ENCODE measurements at regions of chr14 and their contacts with region 1.

Region 1: GRCh38 chr14:75002392-75003249 is at the start of gene EIF2B2:
- DNase-seq: peak; percentile 97 to 99
- ATAC-seq: peak; percentile 99 to 100 (median 100)
- H3K4me3 ChIP-seq: peak within 1 kb of the TSS; percentile 73 to 95 (median 86)
- H3K27ac ChIP-seq: peak within 1 kb of the TSS; percentile 59 to 94 (median 90)
- H3K4me1 ChIP-seq: peaks cover 0 to 31% (median 21%) of the 10 kb centered on the region in 9 donors
- H3K27me3 ChIP-seq: no peaks in the 10 kb centered on the region
- CTCF ChIP-seq: peak in 4 of 9 donors; percentile 15 to 48 (median 42)
- total RNA-seq, gene EIF2B2: 25.9 to 44.5 (median 31.5) TPM

Region 2: GRCh38 chr14:74945823-74946682 is 56.6 kb before region 1 on chr14:
- intact Hi-C with region 1: loop called in 8 of 10 experiments (anchors 5 to 10 kb)
- DNase-seq: peak; percentile 76 to 83
- ATAC-seq: peak; percentile 74 to 86 (median 81)
- H3K4me3 ChIP-seq: peak overlapping the region in 3 of 10 donors; percentile 4 to 21 (median 17)
- H3K27ac ChIP-seq: peak overlapping the region in 7 of 10 donors; percentile 8 to 76 (median 54)
- H3K4me1 ChIP-seq: peaks cover 14 to 72% (median 44%) of the 10 kb centered on the region in 9 donors
- H3K27me3 ChIP-seq: peaks cover 0 to 4% (median 0%) of the 10 kb centered on the region in 7 donors
- CTCF ChIP-seq: peak; percentile 89 to 96 (median 95)

Region 3: DNA sequence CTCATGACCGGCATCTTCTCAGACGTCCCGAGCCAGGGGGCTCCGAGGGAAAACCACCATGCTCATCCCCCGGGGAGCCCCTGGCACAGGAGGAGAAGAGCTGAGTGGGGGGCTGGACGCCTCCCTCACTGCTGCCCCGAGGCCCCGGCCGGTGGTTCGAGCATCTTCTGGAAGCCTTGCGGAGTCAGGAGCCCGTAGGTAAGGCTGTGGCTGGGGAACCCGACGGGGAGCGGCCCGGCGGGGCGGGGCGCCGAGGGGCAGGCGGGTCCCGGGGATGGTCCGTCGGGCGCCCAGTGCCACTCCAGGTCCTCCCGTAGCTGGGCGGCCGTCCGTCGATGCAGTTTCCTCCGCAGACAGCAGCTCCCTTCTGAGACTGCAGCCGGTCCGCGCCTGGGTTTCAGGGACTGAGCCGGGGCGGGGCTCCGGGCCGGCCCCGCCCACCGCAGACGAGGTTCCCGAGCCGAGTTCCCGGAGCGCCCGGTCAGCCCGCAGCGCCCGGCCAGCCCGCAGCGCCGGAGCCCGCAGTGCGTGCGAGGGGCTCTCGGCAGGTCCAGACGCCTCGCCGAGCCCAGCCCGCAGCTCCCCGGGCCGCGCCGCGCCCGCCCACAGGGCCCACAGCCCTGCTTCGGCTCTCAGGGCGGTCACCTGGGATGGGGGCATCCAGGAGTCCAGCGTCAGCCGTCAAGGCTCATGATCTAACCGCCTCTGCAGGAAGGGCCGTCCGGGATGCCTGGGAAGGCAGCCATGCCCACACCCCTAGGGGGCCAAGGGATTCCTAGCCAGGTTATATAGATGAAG is 47.2 kb before region 1 on chr14 and contains the start of gene PGF:
- intact Hi-C with region 1: loop called in 2 of 10 experiments (anchors 5 to 10 kb)
- DNase-seq: peak; percentile 71 to 81
- ATAC-seq: peak; percentile 71 to 90 (median 78)
- H3K4me3 ChIP-seq: peak within 1 kb of the TSS; percentile 46 to 87 (median 70)
- H3K27ac ChIP-seq: peak within 1 kb of the TSS in 9 of 10 donors; percentile 57 to 87 (median 79)
- H3K4me1 ChIP-seq: peaks cover 11 to 60% (median 35%) of the 10 kb centered on the region in 9 donors
- H3K27me3 ChIP-seq: peaks cover 0 to 23% (median 0%) of the 10 kb centered on the region in 7 donors
- CTCF ChIP-seq: no peak
- total RNA-seq, gene PGF: 2.1 to 22.5 (median 6.1) TPM

Region 4: GRCh38 chr14:74964787-74965485 is 37.7 kb before region 1 on chr14:
- intact Hi-C with region 1: loop called in 1 of 10 experiments (anchors 5 kb)
- DNase-seq: no peak
- ATAC-seq: peak in 6 of 8 donors; percentile 16 to 81 (median 60)
- H3K4me3 ChIP-seq: no peak overlapping the region
- H3K27ac ChIP-seq: peak overlapping the region in 8 of 10 donors; percentile 12 to 68 (median 57)
- H3K4me1 ChIP-seq: peaks cover 0 to 31% (median 22%) of the 10 kb centered on the region in 9 donors
- H3K27me3 ChIP-seq: no peaks in the 10 kb centered on the region
- CTCF ChIP-seq: no peak

Region 5: GRCh38 chr14:75040507-75040906 is 37.9 kb after region 1 on chr14:
- intact Hi-C with region 1: no loop called
- DNase-seq: no peak
- ATAC-seq: no peak
- H3K4me3 ChIP-seq: no peak overlapping the region
- H3K27ac ChIP-seq: no peak overlapping the region
- H3K4me1 ChIP-seq: peaks cover 0 to 25% (median 15%) of the 10 kb centered on the region in 9 donors
- H3K27me3 ChIP-seq: no peaks in the 10 kb centered on the region
- CTCF ChIP-seq: no peak

Region 6: GRCh38 chr14:75050852-75051554 is 48.4 kb after region 1 on chr14 and contains the start of gene MLH3:
- intact Hi-C with region 1: loop called in 2 of 10 experiments (anchors 5 to 10 kb)
- DNase-seq: peak; percentile 81 to 89
- ATAC-seq: peak; percentile 89 to 97 (median 95)
- H3K4me3 ChIP-seq: peak within 1 kb of the TSS; percentile 47 to 74 (median 66)
- H3K27ac ChIP-seq: peak within 1 kb of the TSS; percentile 80 to 93 (median 90)
- H3K4me1 ChIP-seq: peaks cover 0 to 36% (median 21%) of the 10 kb centered on the region in 9 donors
- H3K27me3 ChIP-seq: no peaks in the 10 kb centered on the region
- CTCF ChIP-seq: peak in 3 of 9 donors; percentile 13 to 21 (median 14)
- total RNA-seq, gene MLH3: 14.7 to 21.6 (median 18.7) TPM

Region 7: GRCh38 chr14:75063407-75064213 is 61.0 kb after region 1 on chr14 and contains the start of gene ACYP1:
- intact Hi-C with region 1: loop called in 5 of 10 experiments (anchors 5 to 10 kb)
- DNase-seq: peak; percentile 92 to 94
- ATAC-seq: peak; percentile 91 to 98 (median 96)
- H3K4me3 ChIP-seq: peak within 1 kb of the TSS; percentile 47 to 94 (median 74)
- H3K27ac ChIP-seq: peak within 1 kb of the TSS in 9 of 10 donors; percentile 14 to 86 (median 72)
- H3K4me1 ChIP-seq: peaks cover 2 to 41% (median 25%) of the 10 kb centered on the region in 9 donors
- H3K27me3 ChIP-seq: no peaks in the 10 kb centered on the region
- CTCF ChIP-seq: peak in 1 of 9 donors; percentile 14
- total RNA-seq, gene ACYP1: 7.9 to 12.6 (median 10.0) TPM

Region 8: GRCh38 chr14:75069045-75069810 is 66.6 kb after region 1 on chr14 and contains the start of gene ZC2HC1C:
- intact Hi-C with region 1: loop called in 4 of 10 experiments (anchors 5 to 10 kb)
- DNase-seq: peak; percentile 97 to 99
- ATAC-seq: peak; percentile 94 to 98 (median 96)
- H3K4me3 ChIP-seq: peak within 1 kb of the TSS; percentile 13 to 69 (median 61)
- H3K27ac ChIP-seq: peak within 1 kb of the TSS; percentile 90 to 98 (median 94)
- H3K4me1 ChIP-seq: peaks cover 5 to 68% (median 37%) of the 10 kb centered on the region in 9 donors
- H3K27me3 ChIP-seq: no peaks in the 10 kb centered on the region
- CTCF ChIP-seq: peak in 3 of 9 donors; percentile 4 to 21 (median 8)
- total RNA-seq, gene ZC2HC1C: 4.6 to 12.4 (median 8.9) TPM